CD8-positive, alpha-beta memory T cell (primary cell): ENCODE measurements at regions of chrX and their contacts with region 1.

Region 1: DNA sequence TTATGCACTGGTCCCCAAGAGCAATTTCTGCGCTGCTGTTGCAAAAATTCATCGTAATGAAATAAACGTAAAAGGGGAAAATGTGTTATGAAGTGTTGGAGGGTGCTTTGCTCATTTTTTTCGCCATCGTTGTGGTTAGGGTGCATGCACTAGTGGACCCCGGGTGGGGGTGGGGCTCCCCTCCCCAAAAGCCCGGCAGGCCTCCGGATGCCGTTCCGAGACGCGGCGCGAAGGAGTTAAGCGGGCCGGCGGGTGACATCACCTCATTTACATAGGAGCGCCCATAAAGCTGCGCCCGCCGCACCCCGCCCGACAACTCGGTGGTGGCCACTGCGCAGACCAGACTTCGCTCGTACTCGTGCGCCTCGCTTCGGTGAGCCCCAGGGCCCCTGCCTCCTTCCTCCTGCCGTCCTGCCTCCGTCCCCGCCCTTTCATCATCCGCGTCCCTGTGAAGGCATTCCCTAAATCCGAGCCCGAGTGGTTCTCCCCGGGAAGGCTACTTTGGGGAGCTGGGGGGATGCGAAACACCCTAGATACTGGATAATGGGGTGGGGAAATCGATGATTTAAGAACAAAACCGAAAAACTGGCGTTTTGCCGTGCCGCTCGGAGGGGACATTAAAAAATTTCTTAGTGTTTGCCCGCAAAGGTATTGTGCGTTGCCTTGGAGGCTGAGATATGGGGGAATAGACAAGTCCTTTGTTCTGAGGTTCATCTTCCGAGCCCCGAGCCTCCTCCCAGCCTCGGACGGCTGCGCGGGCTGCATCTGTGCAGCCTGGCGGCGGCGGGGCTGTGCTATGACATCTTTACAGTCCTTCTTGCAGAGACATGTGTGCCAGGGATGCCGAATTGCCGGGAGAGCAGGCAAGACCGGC is at the start of gene TMSB4X:
- DNase-seq: peak; percentile 72 to 92 (median 79)
- H3K4me3 ChIP-seq: peak within 1 kb of the TSS; percentile 97
- H3K4me3 Mint-ChIP-seq: peak within 1 kb of the TSS; percentile 97 to 100 (median 98)
- H3K27ac ChIP-seq: peak within 1 kb of the TSS; percentile 96
- H3K27ac Mint-ChIP-seq: peak within 1 kb of the TSS; percentile 81 to 99 (median 96)
- H3K4me1 ChIP-seq: peaks cover 21% of the 10 kb centered on the region
- H3K4me1 Mint-ChIP-seq: peaks cover 32 to 58% (median 58%) of the 10 kb centered on the region in 3 donors
- H3K27me3 ChIP-seq: no peaks in the 10 kb centered on the region
- H3K27me3 Mint-ChIP-seq: peaks cover 0 to 39% of the 10 kb centered on the region in 2 donors
- total RNA-seq, gene TMSB4X: 3,415 to 3,478 TPM

Region 2: GRCh38 chrX:12955882-12956703 is 18.9 kb before region 1 on chrX:
- CTCF ChIA-PET with region 1: interaction called, 224 read pairs
- POLR2A ChIA-PET with region 1: interaction called, 194 read pairs
- DNase-seq: peak; percentile 44 to 84 (median 73)
- H3K4me3 ChIP-seq: peak overlapping the region; percentile 67
- H3K4me3 Mint-ChIP-seq: peak overlapping the region; percentile 75 to 92 (median 88)
- H3K27ac ChIP-seq: peak overlapping the region; percentile 87
- H3K27ac Mint-ChIP-seq: peak overlapping the region; percentile 96 to 100 (median 98)
- H3K4me1 ChIP-seq: peaks cover 80% of the 10 kb centered on the region
- H3K4me1 Mint-ChIP-seq: peaks cover 82 to 91% (median 83%) of the 10 kb centered on the region in 3 donors
- H3K27me3 ChIP-seq: no peaks in the 10 kb centered on the region
- H3K27me3 Mint-ChIP-seq: peaks cover 0 to under 1% of the 10 kb centered on the region in 2 donors

Region 3: DNA sequence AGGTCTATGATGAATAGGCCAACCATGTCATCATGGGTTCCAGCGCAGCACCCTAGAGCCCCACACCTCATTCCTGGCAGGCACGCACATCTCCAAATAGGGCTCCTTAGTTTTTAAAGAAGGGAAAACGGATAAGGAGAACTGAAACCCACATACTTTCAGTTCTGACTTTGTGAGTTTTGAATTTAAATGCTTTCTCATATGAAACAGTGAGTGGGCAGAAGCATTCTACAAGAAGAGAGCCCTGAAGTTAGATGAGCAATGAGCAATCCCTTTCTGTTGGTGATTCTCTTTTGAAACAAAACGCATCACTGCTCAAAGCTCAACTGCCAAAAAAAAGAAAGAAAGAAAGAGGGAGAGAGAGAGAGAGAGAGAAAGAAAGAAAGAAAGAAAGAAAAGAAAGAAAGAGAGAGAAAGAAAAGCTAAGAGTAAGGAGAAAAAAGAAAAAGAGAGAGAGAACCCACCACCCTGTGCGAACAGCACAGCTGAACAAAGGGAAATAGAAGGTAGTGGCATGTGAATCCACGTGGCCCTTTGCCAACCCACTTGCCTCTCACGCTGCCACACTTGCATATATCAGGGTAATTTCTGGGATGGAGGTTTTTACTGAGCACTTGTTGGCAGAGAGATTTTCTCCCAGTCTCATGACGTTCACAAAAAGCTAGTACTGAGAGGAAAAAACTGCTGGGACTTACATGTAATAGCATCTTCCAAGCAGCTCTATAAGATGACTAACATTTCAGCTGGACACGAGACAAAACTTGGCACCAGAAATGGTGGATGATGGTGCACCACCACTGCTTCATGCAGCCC is 30.8 kb after region 1 on chrX:
- CTCF ChIA-PET with region 1: interaction called, 14 read pairs
- POLR2A ChIA-PET with region 1: interaction called, 12 read pairs
- DNase-seq: no peak
- H3K4me3 ChIP-seq: no peak overlapping the region
- H3K4me3 Mint-ChIP-seq: peak overlapping the region; percentile 56 to 75 (median 64)
- H3K27ac ChIP-seq: no peak overlapping the region
- H3K27ac Mint-ChIP-seq: peak overlapping the region; percentile 84 to 96 (median 91)
- H3K4me1 ChIP-seq: peaks cover 69% of the 10 kb centered on the region
- H3K4me1 Mint-ChIP-seq: peaks cover 45 to 80% (median 72%) of the 10 kb centered on the region in 3 donors
- H3K27me3 ChIP-seq: no peaks in the 10 kb centered on the region
- H3K27me3 Mint-ChIP-seq: peaks cover 0 to 10% of the 10 kb centered on the region in 2 donors

Region 4: DNA sequence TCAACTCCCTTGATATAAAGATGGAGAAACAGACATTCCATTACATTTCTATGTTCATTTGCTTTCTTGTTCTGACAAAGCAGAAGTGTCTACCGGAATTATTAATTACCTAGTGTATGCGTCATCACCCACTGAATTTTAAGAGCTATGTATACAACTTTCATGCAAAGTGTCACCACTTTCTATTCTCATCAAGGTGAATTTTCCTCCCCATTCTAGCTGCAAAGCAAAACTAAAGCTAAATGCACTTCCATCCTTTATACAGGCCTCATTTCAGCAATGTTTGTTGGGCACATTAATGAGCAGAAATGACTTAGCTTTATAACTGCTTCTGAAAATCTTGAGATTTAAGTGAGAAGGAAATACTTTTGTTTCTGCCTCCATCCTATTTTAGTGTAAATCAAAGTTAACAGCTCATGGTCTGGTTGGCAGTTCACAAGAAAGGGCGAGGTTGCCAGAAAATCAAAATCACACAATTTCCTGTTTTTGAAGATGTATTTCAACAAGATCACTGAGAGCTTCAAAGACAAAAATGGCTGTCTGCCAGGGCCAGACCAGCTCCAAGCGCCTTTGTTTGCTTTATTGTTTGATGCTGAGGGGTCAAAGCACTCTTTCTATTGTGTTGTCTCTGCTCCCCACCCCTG is 76.6 kb after region 1 on chrX:
- CTCF ChIA-PET with region 1: interaction called, 9 read pairs
- POLR2A ChIA-PET with region 1: interaction called, 10 read pairs
- DNase-seq: peak in 3 of 5 donors; percentile 46 to 78 (median 58)
- H3K4me3 ChIP-seq: no peak overlapping the region
- H3K4me3 Mint-ChIP-seq: peak overlapping the region; percentile 8 to 69 (median 51)
- H3K27ac ChIP-seq: peak overlapping the region; percentile 21
- H3K27ac Mint-ChIP-seq: peak overlapping the region; percentile 61 to 97 (median 90)
- H3K4me1 ChIP-seq: peaks cover 84% of the 10 kb centered on the region
- H3K4me1 Mint-ChIP-seq: peaks cover 61 to 84% (median 83%) of the 10 kb centered on the region in 3 donors
- H3K27me3 ChIP-seq: no peaks in the 10 kb centered on the region
- H3K27me3 Mint-ChIP-seq: peaks cover 0 to 7% of the 10 kb centered on the region in 2 donors

Region 5: DNA sequence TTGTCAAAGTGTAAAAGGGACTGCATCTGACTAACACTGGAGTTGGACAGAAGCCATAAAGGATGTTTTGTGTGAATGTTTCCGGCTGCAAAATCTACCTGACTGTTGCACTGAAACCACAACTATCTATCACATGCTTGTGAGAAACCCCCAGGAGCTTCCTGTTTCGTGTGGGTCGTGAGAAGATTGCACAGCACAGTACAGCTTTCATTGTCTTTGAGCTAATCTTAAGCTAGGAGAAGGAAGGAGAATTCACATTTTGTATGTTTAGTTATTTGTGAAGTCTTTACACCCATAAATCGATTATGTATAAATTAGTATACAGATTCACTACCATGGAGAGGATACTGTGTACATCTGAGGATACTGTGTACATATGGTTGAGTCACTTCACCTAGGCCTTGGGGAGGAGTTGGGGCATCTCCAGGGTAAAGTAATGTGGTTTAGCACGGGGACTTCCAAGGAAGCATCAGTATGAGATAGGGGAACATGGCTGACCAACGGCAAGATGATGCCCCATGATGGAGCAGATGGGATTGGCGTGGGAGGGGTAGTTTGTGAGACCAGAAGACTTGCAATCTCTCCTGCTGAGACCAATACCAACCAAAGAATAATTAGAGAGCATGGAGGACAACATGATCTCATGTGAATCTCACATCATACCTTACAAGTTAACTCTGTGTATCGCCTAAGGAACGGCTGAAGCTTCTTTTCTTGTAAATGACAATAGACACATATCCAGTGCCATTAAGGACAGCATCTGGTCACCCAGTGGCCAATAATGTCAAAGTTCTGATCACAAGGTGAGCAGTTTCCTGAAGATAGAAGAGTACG is 112.5 kb after region 1 on chrX:
- CTCF ChIA-PET with region 1: interaction called, 196 read pairs
- POLR2A ChIA-PET with region 1: interaction called, 104 read pairs
- DNase-seq: peak in 4 of 5 donors; percentile 59 to 90 (median 86)
- H3K4me3 ChIP-seq: peak overlapping the region; percentile 35
- H3K4me3 Mint-ChIP-seq: peak overlapping the region; percentile 57 to 87 (median 81)
- H3K27ac ChIP-seq: peak overlapping the region; percentile 68
- H3K27ac Mint-ChIP-seq: peak overlapping the region; percentile 96 to 99 (median 98)
- H3K4me1 ChIP-seq: peaks cover 94% of the 10 kb centered on the region
- H3K4me1 Mint-ChIP-seq: peaks cover 84 to 99% (median 97%) of the 10 kb centered on the region in 3 donors
- H3K27me3 ChIP-seq: no peaks in the 10 kb centered on the region
- H3K27me3 Mint-ChIP-seq: peaks cover 0 to 11% of the 10 kb centered on the region in 2 donors

Region 6: DNA sequence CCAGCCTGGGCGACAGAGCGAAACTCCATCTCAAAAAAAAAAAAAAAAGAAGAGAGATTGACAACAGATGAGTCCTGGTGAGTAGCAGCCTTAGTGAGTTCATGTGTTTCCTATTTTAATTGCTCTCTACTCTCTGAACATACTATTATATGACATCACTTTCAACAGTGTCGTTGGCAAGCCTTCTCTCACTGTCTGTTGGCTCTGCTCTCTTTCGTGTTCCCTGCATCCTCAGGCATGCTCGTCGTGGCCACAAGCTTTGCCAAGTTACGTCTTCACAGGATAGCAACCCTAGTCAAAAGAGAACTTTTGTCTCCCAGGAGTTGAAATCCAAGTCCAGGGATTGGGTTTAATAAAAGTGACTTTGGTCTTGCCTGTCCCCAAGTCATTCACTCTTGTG is 477.2 kb after region 1 on chrX:
- CTCF ChIA-PET with region 1: no interaction called
- POLR2A ChIA-PET with region 1: no interaction called
- DNase-seq: no peak
- H3K4me3 ChIP-seq: no peak overlapping the region
- H3K4me3 Mint-ChIP-seq: no peak overlapping the region
- H3K27ac ChIP-seq: no peak overlapping the region
- H3K27ac Mint-ChIP-seq: peak overlapping the region in 2 of 8 donors; percentile 10 to 48
- H3K4me1 ChIP-seq: no peaks in the 10 kb centered on the region
- H3K4me1 Mint-ChIP-seq: no peaks in the 10 kb centered on the region
- H3K27me3 ChIP-seq: no peaks in the 10 kb centered on the region
- H3K27me3 Mint-ChIP-seq: peaks cover 5 to 9% of the 10 kb centered on the region in 2 donors